Motor neuron (in vitro differentiated cells): ENCODE measurements at regions of chr6 and their contacts with region 1.

Region 1: GRCh38 chr6:8983188-8983688 is 547.9 kb upstream of the SLC35B3 start:
- ATAC-seq: peak; percentile 75 to 99 (median 90)
- H3K4me3 ChIP-seq: no peak overlapping the region
- H3K27ac ChIP-seq: no peak overlapping the region
- H3K4me1 ChIP-seq: no peaks in the 10 kb centered on the region

Region 2: DNA sequence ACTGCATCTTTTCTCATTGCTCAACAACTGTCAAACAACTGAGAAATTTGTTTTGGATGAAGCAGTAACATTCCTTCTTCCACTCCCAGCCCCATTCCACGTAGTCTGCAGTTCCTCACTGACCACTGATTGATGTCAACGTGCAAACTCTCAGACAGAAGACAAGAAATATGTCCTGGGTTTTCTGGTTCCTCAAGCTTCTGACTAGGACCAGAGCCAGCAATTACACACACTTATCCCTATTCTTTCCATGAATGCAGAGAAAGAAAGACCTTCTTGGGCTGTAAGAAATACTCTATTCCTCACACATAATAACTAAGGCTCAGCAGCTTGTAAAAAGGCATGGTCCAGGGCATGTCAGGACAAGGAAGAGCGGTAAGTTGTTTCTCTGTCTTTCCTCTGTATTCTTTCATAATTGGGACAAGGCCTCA is 242.2 kb after region 1 on chr6:
- in situ Hi-C with region 1: loop called in 1 of 9 experiments (anchors 25 kb)
- ATAC-seq: peak in 1 of 8 experiments; percentile 43
- H3K4me3 ChIP-seq: no peak overlapping the region
- H3K27ac ChIP-seq: no peak overlapping the region
- H3K4me1 ChIP-seq: no peaks in the 10 kb centered on the region

Region 3: DNA sequence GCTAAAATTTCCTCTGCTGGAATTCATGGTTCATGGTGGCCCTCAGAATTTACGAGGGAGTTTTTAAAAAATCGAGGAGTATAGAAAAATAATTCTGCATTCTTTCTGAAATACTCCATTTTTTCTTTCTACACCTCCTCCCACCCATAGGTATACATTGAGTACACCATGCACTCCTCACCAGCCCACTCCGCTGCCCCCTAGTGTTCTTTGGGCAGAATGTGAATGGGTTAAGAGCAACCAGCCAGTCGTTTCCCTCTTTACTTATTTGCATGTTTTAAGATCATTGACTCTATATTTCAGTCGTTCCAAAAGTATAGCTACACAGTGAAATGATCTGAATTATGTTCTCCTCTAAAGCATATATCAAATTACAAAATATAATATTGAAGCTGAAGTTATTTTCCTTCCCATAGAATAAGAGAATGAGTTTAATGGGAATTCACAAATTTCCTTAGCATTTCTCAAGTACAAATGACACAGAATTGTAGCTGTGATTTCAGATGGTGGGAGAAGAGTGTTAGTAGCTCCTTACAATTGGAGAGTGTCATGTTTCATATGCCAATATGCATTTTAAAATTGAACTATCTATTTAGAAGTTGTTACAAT is 429.8 kb after region 1 on chr6:
- in situ Hi-C with region 1: loop called in 1 of 9 experiments (anchors 25 kb)
- ATAC-seq: peak in 3 of 8 experiments; percentile 18 to 68 (median 37)
- H3K4me3 ChIP-seq: no peak overlapping the region
- H3K27ac ChIP-seq: no peak overlapping the region
- H3K4me1 ChIP-seq: peaks cover 5 to 7% of the 10 kb centered on the region in 2 donors

Region 4: DNA sequence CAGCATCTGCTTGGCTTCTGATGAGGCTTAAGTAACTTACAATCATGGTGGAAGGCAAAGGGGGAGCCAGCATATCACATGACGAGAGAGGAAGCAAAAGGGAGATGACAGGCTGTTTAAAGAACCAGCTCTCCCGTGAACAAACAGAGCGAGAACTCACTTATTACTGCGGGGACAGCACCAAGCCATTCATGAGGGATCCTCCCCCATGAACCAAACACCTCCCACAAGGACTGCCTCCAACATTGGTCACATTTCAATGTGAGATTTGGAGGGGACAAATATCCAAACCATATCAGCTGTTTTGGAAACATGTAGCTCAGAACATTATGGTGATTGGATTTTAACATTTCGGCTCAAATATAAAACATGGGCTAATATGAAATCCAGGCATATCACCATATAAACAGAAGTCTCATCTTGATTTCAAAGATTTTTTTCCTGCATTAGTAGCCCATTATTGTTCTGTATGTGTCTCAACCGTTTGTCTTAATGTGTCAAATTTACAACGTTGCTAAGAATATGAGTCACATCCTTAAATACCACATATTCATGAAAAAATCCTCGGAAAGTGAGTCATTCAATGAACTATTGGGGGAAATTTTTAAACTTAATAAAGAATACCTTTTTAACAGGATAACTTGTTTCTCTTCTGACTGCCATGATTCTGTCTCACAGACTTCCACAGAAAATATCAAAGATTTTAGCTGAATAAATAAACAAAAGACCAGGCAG is 537.3 kb after region 1 on chr6:
- in situ Hi-C with region 1: loop called in 1 of 9 experiments (anchors 25 kb)
- ATAC-seq: peak in 4 of 8 experiments; percentile 38 to 91 (median 72)
- H3K4me3 ChIP-seq: no peak overlapping the region
- H3K27ac ChIP-seq: no peak overlapping the region
- H3K4me1 ChIP-seq: peaks cover 8 to 10% of the 10 kb centered on the region in 2 donors

Region 5: DNA sequence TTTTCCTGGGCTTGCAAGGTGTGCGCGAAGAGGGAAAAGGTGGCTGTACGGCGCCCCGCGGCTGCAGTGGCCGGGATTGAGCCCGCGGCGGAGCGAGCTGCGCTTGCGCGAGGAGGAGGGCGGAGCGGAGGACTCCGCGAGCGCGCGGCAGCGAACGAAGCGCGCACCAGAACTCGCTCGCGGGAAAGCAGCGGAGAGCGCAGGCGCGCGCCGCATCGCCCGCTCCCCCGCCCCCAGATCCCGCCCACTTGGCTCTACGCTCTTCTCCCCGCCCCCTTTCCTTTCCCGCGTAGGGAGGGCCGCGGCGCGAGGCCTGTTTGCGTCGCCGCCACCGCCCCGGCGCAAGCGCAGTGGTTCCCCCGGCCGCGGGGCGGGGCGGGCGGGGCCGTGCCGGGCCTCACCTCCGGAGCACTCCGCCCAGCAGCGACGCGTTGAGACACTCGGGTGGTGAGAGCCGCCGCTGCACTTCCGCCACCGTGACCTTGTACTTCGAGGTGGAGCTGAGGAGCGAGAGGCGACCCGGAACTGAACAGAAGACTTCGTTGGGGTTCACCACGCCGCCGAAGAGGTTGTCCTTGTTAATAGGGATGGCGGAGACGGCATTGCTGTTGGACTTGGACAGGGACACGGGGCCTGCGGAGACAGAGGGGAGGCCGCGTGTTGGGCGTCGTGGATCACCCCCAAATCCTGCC is 1421.0 kb after region 1 on chr6:
- in situ Hi-C with region 1: loop called in 3 of 9 experiments (anchors 25 kb)
- ATAC-seq: peak; percentile 87 to 94 (median 94)
- H3K4me3 ChIP-seq: peak overlapping the region; percentile 36 to 47 (median 45)
- H3K27ac ChIP-seq: peak overlapping the region; percentile 24 to 77
- H3K4me1 ChIP-seq: peaks cover 9 to 10% of the 10 kb centered on the region in 2 donors

Region 6: DNA sequence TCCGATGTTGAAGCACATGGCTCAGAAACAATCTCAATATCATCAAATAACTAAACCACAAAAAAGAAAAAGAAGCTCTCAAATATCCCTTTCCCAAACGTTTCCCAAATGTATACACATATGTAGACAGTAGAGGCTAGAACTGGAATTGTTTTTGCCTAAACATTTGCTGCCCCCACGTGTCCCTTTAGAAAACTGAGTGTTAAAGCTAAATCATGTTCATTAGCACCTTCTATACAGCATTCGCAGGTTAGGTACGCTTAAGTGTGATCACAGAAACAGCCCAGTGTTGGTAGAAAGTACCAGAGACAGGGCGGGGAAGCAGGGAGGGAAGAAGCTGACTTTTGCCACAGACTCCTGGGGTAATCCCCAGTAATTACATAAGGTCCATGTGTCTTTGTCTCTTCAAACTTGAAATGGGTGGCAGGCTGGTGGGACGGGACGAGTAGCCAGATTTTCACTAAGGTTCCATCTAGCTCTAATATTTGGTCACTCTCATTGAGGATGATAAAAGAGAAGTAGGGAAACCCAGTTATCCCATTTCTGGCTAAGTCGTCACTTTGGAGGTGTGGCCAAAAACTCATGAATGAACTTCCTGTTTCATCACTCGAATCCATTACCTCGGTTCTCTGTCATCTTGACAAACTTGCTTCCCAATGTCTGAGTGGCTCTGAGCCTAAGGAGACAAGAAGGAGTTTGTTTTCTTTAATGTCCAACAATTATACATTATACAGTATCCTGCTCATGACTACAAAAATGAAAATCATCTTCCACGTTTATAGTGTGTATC is 1446.6 kb after region 1 on chr6:
- in situ Hi-C with region 1: loop called in 1 of 9 experiments (anchors 25 kb)
- ATAC-seq: peak; percentile 38 to 68 (median 49)
- H3K4me3 ChIP-seq: no peak overlapping the region
- H3K27ac ChIP-seq: no peak overlapping the region
- H3K4me1 ChIP-seq: peaks cover 7 to 11% of the 10 kb centered on the region in 2 donors